Esophagus muscularis mucosa (tissue), 4 donors: ENCODE measurements at regions of chr3 and their contacts with region 1.

Region 1: DNA sequence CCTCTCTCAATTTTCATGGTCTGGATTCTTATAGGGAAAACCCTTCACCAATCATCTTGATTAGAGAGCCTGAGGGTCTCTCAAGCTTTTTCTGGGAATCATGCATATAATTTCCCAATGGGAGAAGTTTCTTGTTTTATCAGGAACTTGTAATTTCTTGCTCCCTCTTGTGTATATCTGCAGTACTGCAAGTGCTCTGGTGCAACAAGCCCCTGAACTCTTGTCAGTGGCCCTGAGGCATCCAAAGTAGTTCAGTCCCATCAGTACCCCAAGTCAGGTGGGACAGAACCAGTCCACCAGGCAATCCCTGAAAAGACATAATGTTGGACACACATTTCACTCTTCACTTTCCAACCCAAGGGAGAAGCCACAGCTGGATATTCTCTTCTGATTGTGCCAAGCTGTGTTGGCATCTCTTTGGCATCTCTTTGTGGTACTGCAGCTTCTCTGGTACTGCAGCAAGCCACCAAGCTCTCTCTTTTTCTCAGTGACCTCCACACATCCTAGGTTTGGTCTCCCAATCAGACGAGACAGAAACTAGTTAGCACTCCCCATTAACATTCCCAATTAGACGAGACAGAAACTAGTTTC is 214.5 kb downstream of the ZIC4 start:
- DNase-seq: no peak
- H3K4me3 ChIP-seq: no peak overlapping the region
- H3K27ac ChIP-seq: no peak overlapping the region
- H3K4me1 ChIP-seq: no peaks in the 10 kb centered on the region
- H3K27me3 ChIP-seq: no peaks in the 10 kb centered on the region
- CTCF ChIP-seq: peak; percentile 38 to 66 (median 53)
- EP300 ChIP-seq: no peak
- POLR2A ChIP-seq: no peak

Region 2: GRCh38 chr3:146750196-146750595 is 441.7 kb before region 1 on chr3:
- intact Hi-C with region 1: loop called (anchors 10 kb)
- DNase-seq: no peak
- H3K4me3 ChIP-seq: no peak overlapping the region
- H3K27ac ChIP-seq: no peak overlapping the region
- H3K4me1 ChIP-seq: no peaks in the 10 kb centered on the region
- H3K27me3 ChIP-seq: no peaks in the 10 kb centered on the region
- CTCF ChIP-seq: no peak
- EP300 ChIP-seq: no peak
- POLR2A ChIP-seq: no peak